ENCODE measurements at regions of chr3 and their contacts with region 1.

Region 1: DNA sequence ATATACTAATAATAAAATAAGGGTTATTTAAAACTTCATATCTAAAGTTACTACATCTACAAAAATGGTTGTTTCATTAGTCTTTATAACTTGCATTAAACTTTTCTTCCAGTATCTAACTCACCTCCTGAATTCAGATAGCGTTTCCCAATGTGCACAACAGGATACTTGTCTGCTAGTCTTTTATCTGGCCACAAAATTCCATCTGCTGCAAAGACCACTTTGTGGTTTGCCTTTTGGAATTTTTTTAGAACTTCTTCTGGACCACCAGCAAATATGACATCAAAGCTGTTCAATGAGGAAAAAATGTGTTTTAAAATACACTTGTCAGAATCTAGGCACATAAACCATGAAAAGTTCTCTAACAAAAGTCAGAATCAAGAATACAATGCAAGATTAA is 50.8 kb downstream of the PLOD2 start:
- DNase-seq: no peak
- H3K4me3 Mint-ChIP-seq: no peak overlapping the region
- H3K27ac Mint-ChIP-seq: no peak overlapping the region
- H3K4me1 Mint-ChIP-seq: no peaks in the 10 kb centered on the region
- H3K27me3 Mint-ChIP-seq: no peaks in the 10 kb centered on the region

Region 2: GRCh38 chr3:145776782-145777408 is 333.3 kb before region 1 on chr3:
- intact Hi-C with region 1: no loop called
- DNase-seq: no peak
- H3K4me3 Mint-ChIP-seq: no peak overlapping the region
- H3K27ac Mint-ChIP-seq: no peak overlapping the region
- H3K4me1 Mint-ChIP-seq: no peaks in the 10 kb centered on the region
- H3K27me3 Mint-ChIP-seq: no peaks in the 10 kb centered on the region

Region 3: DNA sequence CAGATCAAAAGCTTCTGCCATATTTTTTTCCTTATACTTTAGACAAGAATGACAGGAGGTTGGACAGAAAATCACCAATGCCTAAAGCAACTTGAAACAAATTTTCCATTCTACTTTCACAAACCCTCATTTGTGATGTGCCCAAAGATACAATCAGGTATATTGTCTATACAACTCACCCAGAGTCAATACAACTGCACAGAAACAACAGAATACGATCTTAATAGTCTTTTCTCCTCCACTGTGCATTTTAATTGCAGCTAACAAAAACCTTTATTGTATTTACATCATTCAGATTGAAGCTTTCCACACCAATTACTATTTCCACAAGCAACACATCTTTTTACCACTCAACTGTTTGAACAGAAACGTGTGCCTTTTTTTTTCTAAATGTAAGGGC is 29.6 kb before region 1 on chr3:
- intact Hi-C with region 1: loop called (anchors 2 kb)
- DNase-seq: no peak
- H3K4me3 Mint-ChIP-seq: no peak overlapping the region
- H3K27ac Mint-ChIP-seq: no peak overlapping the region
- H3K4me1 Mint-ChIP-seq: no peaks in the 10 kb centered on the region
- H3K27me3 Mint-ChIP-seq: no peaks in the 10 kb centered on the region

Region 4: DNA sequence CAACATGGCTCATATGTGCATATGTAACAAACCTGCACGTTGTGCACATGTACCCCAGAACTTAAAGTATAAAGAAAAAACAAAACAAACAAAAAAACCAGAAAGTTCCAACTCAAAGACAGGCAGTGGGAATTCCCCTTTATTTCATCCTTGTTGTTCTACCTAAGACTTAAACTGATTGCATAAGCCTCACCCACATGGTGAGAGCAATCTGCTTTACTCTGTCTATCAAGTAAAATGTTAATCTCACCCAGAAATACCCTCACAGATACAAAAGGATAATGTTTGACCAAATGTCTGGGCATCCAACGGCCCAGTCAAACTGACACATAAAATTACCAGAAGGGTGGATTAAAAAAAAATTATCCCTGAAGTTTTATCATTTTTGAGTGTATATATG is 685.9 kb after region 1 on chr3:
- intact Hi-C with region 1: no loop called
- DNase-seq: no peak
- H3K4me3 Mint-ChIP-seq: no peak overlapping the region
- H3K27ac Mint-ChIP-seq: no peak overlapping the region
- H3K4me1 Mint-ChIP-seq: no peaks in the 10 kb centered on the region
- H3K27me3 Mint-ChIP-seq: no peaks in the 10 kb centered on the region

Measured in activated T-helper 1 cell treated with anti-CD3 and anti-CD28 coated beads, Interleukin-12 subunit alpha, Interleukin-12 subunit beta, Interleukin-2, Interleukin-4 antibody, amounts not matched to agents 30 ng/mL and 10 ng/mL and 1 ng/mL, durations not matched to agents 14 hours and 24 hours and 36 hours (primary cell).